AG04449 (cell line): ENCODE measurements at regions of chr19 and their contacts with region 1.

Region 1: GRCh38 chr19:46828484-46828883 is 22.2 kb downstream of the AP2S1 start:
- DNase-seq: no peak
- H3K4me3 ChIP-seq: no peak overlapping the region
- CTCF ChIP-seq: no peak

Region 2: GRCh38 chr19:46571531-46571930 is 257.0 kb before region 1 on chr19:
- CTCF ChIA-PET with region 1: no interaction called
- POLR2A ChIA-PET with region 1: no interaction called
- DNase-seq: no peak
- H3K4me3 ChIP-seq: no peak overlapping the region
- CTCF ChIP-seq: peak; percentile 15

Region 3: DNA sequence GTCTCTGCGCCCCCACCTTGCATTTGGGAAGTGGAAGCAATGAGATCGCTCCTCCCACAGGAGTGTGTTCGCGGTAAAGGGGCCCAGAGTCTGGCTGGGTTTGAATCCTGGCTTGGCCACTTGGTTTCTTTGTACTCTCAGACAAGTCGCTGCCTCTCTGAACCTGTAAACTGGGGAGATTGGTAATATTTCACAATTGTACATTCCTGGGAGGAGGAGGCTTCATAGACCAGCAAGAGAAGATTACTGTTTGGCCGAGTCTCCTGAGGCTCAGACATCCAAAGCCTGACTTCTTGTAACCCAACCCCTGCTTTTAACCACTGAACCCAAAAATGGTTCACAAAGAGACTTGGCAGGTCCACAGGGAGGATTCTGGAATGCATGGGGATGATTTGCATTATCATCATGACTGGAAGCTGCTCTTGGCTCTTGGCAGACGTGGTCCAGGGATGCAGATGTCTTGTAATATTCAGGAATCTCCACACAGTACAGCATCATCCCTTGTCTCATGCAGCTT is 68.6 kb before region 1 on chr19:
- CTCF ChIA-PET with region 1: interaction called, 13 read pairs
- POLR2A ChIA-PET with region 1: no interaction called
- DNase-seq: peak; percentile 97
- H3K4me3 ChIP-seq: no peak overlapping the region
- CTCF ChIP-seq: no peak

Region 4: DNA sequence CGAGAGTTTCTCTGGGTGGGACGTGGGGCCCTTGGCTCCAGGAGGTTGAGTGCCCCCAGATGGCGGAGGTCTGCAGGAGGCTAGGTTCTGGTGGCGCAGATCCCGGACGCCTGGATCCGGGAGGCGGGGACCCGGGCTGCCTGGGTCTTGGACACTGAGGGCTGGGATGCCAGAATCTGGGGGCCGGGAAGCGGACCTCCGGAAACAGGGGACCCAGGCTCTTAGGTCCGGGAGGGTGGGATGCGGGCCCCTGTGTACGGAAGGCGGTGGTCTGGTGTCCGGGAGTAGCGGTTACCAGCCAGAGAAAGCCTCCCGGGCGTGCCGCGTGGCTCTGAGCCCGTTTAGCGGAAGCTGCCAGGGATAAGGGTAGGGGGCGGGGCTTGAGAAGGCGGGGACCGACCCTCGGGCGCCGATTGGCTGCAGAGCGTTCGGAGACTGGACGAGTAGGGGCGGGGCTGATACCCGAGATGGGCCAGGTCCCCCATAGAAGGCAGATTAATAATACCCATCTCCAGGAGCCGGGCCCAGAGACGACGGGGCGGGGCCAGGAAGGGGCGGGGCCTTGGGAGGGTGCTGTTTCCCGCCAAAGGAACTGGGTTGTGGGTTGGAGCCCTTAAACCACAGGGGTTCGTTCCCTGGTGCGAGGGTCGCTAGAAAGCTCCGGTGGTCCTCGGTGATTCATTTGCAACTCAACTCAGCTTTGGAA is 40.1 kb before region 1 on chr19 and contains the start of gene SLC1A5:
- CTCF ChIA-PET with region 1: interaction called, 8 read pairs
- POLR2A ChIA-PET with region 1: interaction called, 32 read pairs
- DNase-seq: peak; percentile 79
- H3K4me3 ChIP-seq: peak within 1 kb of the TSS; percentile 95
- CTCF ChIP-seq: no peak

Region 5: GRCh38 chr19:46898731-46899130 is 70.2 kb after region 1 on chr19:
- CTCF ChIA-PET with region 1: no interaction called
- POLR2A ChIA-PET with region 1: no interaction called
- DNase-seq: no peak
- H3K4me3 ChIP-seq: no peak overlapping the region
- CTCF ChIP-seq: no peak

Region 6: DNA sequence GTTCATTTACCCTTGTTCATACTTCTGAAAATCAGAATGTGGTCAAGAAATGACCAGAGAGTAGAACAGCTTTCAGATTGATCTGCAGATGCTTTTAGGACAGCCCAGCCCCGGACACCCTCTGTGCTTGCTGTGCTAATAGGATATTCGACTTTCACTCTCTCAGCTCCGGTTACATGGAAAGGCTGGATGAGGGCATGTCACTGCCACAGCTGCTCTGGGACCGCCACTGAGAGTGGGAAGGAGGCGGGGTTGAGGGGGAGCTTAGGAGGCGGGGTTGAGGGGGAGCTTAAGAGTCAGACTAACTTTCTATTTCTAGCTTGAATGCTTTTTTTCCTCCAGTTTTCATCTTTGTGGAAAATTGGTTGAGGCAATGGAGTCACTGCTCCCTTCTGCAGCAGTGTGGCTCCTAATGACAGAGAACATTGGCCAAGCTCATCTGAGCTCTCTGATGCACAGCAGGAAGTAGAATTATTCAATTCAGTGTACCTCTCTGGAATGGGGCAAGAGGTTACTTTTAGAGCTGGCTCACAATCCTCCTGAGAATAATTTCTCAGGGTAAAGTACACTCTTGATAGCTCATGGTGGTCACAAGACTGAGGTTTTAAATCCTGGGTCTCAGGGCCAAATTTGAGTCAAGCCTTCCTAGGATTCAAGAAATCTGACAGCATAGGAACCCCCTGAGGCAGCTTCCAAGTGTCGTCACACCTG is 116.6 kb after region 1 on chr19:
- CTCF ChIA-PET with region 1: no interaction called
- POLR2A ChIA-PET with region 1: no interaction called
- DNase-seq: no peak
- H3K4me3 ChIP-seq: peak overlapping the region; percentile 27
- CTCF ChIP-seq: no peak